HCT116 (cell line): ENCODE measurements at regions of chr14 and their contacts with region 1.

Region 1: GRCh38 chr14:100285021-100285912 is 21.0 kb downstream of the SLC25A29 start:
- DNase-seq: no peak
- ATAC-seq: peak; percentile 84
- H3K4me3 ChIP-seq: peak overlapping the region; percentile 49 to 65
- H3K27ac ChIP-seq: peak overlapping the region; percentile 96
- H3K4me1 ChIP-seq: peaks cover 5 to 20% of the 10 kb centered on the region in 2 experiments; a peak in 2 of 4 replicates
- H3K27me3 ChIP-seq: no peaks in the 10 kb centered on the region
- CTCF ChIP-seq: peak; percentile 75 to 83 (median 78)
- POLR2A ChIP-seq: peak; percentile 63
- RAD21 ChIP-seq: no peak; the same call in 1 of the 2 replicates

Region 2: GRCh38 chr14:100297302-100298300 is 12.3 kb after region 1 on chr14:
- CTCF ChIA-PET with region 1: interaction called, 19 read pairs
- POLR2A ChIA-PET with region 1: no interaction called
- RAD21 ChIA-PET with region 1: no interaction called
- intact Hi-C with region 1: no loop called
- DNase-seq: no peak
- ATAC-seq: no peak
- H3K4me3 ChIP-seq: no peak overlapping the region
- H3K27ac ChIP-seq: no peak overlapping the region
- H3K4me1 ChIP-seq: peaks cover 1 to 2% of the 10 kb centered on the region in 2 experiments; a peak in 3 of 4 replicates
- H3K27me3 ChIP-seq: no peaks in the 10 kb centered on the region
- CTCF ChIP-seq: no peak
- POLR2A ChIP-seq: no peak
- RAD21 ChIP-seq: no peak

Region 3: DNA sequence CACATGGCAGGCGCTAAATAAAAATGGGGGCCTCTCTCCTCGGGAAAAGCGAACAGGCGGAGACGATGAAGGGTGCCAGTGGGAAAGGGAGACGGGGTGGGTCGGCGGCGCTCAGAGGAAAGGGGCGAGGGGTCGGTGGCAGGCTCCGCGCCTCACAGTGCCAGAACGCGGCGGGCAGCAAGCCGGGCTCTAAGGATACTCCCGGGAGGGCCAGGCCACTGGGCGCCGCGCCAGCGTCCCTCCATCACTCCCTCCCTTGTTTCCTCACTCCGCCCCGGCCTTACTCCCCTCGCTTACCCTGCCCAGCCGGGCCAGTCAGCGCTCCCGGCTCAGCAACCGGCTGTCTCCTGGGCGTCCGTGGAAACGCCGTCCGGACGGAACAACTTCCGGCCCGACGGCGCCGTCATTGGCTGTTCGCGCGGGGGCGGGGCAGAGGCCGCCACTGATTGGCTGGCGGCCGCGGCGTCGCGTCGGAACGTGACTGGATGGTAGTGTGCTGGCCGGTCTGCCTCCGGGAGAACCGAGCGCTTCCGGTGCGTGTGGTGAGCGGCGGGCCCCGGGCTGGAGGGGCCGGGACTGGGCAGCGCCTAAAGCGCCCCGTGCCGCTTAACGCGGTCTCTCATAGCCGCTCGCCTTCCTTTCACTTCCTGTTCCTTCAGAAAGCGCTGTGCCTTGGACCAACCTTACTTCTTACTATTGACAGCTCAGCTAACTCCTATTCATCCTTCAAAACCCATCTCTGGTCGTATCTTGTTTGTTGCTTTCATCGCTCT is 90.9 kb after region 1 on chr14:
- CTCF ChIA-PET with region 1: no interaction called
- POLR2A ChIA-PET with region 1: no interaction called
- RAD21 ChIA-PET with region 1: no interaction called
- intact Hi-C with region 1: loop called (anchors 5 kb)
- DNase-seq: peak; percentile 83
- ATAC-seq: peak; percentile 92
- H3K4me3 ChIP-seq: peak within 1 kb of the TSS; percentile 70 to 75
- H3K27ac ChIP-seq: peak within 1 kb of the TSS; percentile 71
- H3K4me1 ChIP-seq: peaks cover 12 to 19% of the 10 kb centered on the region in 2 experiments; a peak in 3 of 4 replicates
- H3K27me3 ChIP-seq: no peaks in the 10 kb centered on the region
- CTCF ChIP-seq: no peak
- POLR2A ChIP-seq: peak; percentile 57
- RAD21 ChIP-seq: no peak